ENCODE measurements at regions of chr20 and their contacts with region 1.

Region 1: GRCh38 chr20:32509639-32510066 is 75.5 kb downstream of the NOL4L start:
- DNase-seq: peak in 1 of 2 experiments; percentile 66
- H3K4me3 ChIP-seq: no peak overlapping the region
- H3K4me3 Mint-ChIP-seq: peak overlapping the region; percentile 56
- H3K27ac Mint-ChIP-seq: peak overlapping the region; percentile 79
- H3K4me1 ChIP-seq: peaks cover 53% of the 10 kb centered on the region
- H3K4me1 Mint-ChIP-seq: peaks cover 42% of the 10 kb centered on the region
- H3K27me3 ChIP-seq: no peaks in the 10 kb centered on the region
- H3K27me3 Mint-ChIP-seq: no peaks in the 10 kb centered on the region
- CTCF ChIP-seq: peak; percentile 44 to 66

Region 2: DNA sequence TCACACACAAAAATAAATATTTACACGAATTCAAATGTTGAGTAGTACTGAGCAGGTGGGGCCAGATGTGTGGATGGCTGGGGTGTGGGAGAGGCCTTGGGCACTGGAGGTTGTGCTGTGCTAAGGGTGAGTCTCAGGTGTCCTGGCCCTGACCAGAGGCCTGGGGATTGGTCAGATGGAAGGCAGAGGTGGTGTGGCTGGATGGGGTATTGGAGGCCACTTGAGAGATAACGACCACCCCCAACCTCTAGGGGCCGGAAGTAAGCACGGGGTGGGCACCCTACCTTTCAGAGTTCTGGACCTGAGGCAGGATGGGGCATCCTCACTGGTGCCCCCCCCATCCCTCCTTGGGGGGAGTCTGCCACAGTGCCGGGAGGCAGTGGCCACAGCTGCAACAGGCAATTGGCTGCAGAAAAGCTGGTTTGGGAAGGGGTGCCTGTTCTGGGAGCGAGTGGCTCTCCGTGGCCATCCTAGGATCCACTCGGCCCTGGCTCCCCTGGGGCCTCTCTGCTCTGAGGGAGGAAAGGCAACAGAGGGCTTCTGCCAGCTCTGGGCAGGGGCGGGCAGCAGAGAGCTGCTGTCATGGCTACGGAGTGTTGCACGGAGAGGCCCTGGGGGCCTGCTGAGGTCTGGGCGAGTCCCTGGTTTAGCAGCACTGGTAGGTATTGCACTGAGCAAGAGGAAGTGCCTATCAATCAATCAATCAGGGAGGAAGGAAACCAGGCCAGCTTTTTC is 63.9 kb before region 1 on chr20:
- CTCF ChIA-PET with region 1: no interaction called
- POLR2A ChIA-PET with region 1: no interaction called
- intact Hi-C with region 1: no loop called
- DNase-seq: peak; percentile 39 to 53
- H3K4me3 ChIP-seq: no peak overlapping the region
- H3K4me3 Mint-ChIP-seq: no peak overlapping the region
- H3K27ac Mint-ChIP-seq: peak overlapping the region; percentile 9
- H3K4me1 ChIP-seq: 0 out of 2 replicates have a peak, but pooled peaks cover 5% of the 10 kb centered on the region
- H3K4me1 Mint-ChIP-seq: peaks cover 22% of the 10 kb centered on the region
- H3K27me3 ChIP-seq: no peaks in the 10 kb centered on the region
- H3K27me3 Mint-ChIP-seq: no peaks in the 10 kb centered on the region
- CTCF ChIP-seq: no peak

Region 3: GRCh38 chr20:32474967-32475811 is 34.5 kb before region 1 on chr20:
- CTCF ChIA-PET with region 1: interaction called, 11 read pairs
- POLR2A ChIA-PET with region 1: interaction called, 3 read pairs
- intact Hi-C with region 1: loop called (anchors 1 kb)
- DNase-seq: peak; percentile 99 to 100
- H3K4me3 ChIP-seq: peak overlapping the region; percentile 42
- H3K4me3 Mint-ChIP-seq: peak overlapping the region; percentile 93
- H3K27ac Mint-ChIP-seq: peak overlapping the region; percentile 93
- H3K4me1 ChIP-seq: peaks cover 79% of the 10 kb centered on the region
- H3K4me1 Mint-ChIP-seq: peaks cover 69% of the 10 kb centered on the region
- H3K27me3 ChIP-seq: no peaks in the 10 kb centered on the region
- H3K27me3 Mint-ChIP-seq: no peaks in the 10 kb centered on the region
- CTCF ChIP-seq: peak in 1 of 2 experiments; percentile 18

Region 4: GRCh38 chr20:32484958-32485769 is 24.5 kb before region 1 on chr20:
- CTCF ChIA-PET with region 1: interaction called, 10 read pairs
- POLR2A ChIA-PET with region 1: interaction called, 7 read pairs
- intact Hi-C with region 1: loop called (anchors 1 kb)
- DNase-seq: peak; percentile 87 to 88
- H3K4me3 ChIP-seq: peak overlapping the region; percentile 77
- H3K4me3 Mint-ChIP-seq: peak overlapping the region; percentile 93
- H3K27ac Mint-ChIP-seq: peak overlapping the region; percentile 84
- H3K4me1 ChIP-seq: peaks cover 32% of the 10 kb centered on the region
- H3K4me1 Mint-ChIP-seq: peaks cover 25% of the 10 kb centered on the region
- H3K27me3 ChIP-seq: no peaks in the 10 kb centered on the region
- H3K27me3 Mint-ChIP-seq: no peaks in the 10 kb centered on the region
- CTCF ChIP-seq: peak; percentile 98 to 99

Region 5: GRCh38 chr20:32497589-32498224 is 11.9 kb before region 1 on chr20:
- CTCF ChIA-PET with region 1: interaction called, 10 read pairs
- POLR2A ChIA-PET with region 1: no interaction called
- intact Hi-C with region 1: no loop called
- DNase-seq: peak in 1 of 2 experiments; percentile 53
- H3K4me3 ChIP-seq: no peak overlapping the region
- H3K4me3 Mint-ChIP-seq: no peak overlapping the region
- H3K27ac Mint-ChIP-seq: no peak overlapping the region
- H3K4me1 ChIP-seq: peaks cover 7% of the 10 kb centered on the region; the same call in 1 of the 2 replicates
- H3K4me1 Mint-ChIP-seq: no peaks in the 10 kb centered on the region
- H3K27me3 ChIP-seq: no peaks in the 10 kb centered on the region
- H3K27me3 Mint-ChIP-seq: no peaks in the 10 kb centered on the region
- CTCF ChIP-seq: no peak